Right cardiac atrium (tissue), 5 donors: ENCODE measurements at regions of chr14 and their contacts with region 1.

Region 1: DNA sequence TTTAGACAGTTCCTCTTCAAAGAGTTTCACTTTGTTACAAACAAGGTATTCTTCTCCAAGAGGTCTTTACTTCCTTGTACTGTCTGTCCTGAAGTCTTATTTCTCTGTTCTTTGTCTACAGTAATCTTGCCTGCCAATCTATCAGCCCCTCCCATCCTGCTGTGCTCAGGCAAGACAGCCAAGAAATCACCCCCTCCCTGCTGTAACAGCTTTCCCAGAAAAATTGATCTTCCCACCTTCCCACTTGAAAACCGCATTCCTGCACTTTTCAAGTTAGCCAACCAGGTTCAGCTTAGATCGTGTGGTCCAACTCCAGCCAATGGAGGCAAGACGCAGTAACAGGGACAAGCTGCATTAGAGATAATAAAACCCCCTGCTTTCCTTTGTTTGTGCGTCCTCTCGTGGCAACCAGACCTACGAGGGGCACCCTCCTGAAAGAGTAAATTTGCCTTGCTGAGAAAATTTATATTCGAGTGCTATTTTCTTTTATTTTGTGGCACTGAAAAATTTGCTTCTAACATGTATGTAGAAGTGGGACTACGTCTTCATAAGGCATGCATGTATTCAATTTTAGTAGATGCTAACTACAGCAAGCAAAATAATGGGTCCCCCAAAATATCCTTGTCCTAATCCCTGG is 46.5 kb upstream of the ESR2 start:
- DNase-seq: no peak
- ATAC-seq: no peak
- H3K4me3 ChIP-seq: no peak overlapping the region
- H3K27ac ChIP-seq: no peak overlapping the region
- H3K4me1 ChIP-seq: no peaks in the 10 kb centered on the region
- H3K27me3 ChIP-seq: no peaks in the 10 kb centered on the region

Region 2: DNA sequence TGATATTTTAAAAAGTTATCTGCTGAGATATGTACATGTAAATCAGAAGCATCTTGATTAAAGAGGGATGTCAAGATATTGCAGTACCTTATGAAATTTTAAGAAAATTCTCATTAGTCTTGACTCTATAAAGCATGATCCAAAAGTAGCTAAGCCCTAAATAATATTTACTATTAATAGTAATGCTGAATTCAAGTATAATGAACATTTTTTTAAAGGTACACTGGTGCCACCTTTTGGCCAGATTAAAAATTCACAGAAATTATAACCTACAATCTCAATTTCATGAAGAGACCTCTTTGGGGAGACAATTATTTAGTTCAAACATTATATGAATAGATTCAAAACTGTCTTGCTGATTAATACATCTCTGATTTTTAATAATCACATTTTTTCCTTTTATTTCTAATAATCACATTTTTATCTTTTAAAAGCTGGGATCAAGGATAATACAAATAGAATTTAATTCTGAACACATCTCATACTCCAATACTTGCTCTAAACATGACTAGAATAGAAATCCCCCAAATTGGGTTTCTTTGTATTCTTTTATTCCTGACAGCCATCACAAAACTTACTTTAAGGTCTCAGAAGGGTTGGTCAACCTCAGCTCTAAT is 138.1 kb after region 1 on chr14:
- intact Hi-C with region 1: loop called in 2 of 4 experiments (anchors 10 kb)
- DNase-seq: no peak
- ATAC-seq: no peak
- H3K4me3 ChIP-seq: no peak overlapping the region
- H3K27ac ChIP-seq: no peak overlapping the region
- H3K4me1 ChIP-seq: no peaks in the 10 kb centered on the region
- H3K27me3 ChIP-seq: no peaks in the 10 kb centered on the region

Region 3: DNA sequence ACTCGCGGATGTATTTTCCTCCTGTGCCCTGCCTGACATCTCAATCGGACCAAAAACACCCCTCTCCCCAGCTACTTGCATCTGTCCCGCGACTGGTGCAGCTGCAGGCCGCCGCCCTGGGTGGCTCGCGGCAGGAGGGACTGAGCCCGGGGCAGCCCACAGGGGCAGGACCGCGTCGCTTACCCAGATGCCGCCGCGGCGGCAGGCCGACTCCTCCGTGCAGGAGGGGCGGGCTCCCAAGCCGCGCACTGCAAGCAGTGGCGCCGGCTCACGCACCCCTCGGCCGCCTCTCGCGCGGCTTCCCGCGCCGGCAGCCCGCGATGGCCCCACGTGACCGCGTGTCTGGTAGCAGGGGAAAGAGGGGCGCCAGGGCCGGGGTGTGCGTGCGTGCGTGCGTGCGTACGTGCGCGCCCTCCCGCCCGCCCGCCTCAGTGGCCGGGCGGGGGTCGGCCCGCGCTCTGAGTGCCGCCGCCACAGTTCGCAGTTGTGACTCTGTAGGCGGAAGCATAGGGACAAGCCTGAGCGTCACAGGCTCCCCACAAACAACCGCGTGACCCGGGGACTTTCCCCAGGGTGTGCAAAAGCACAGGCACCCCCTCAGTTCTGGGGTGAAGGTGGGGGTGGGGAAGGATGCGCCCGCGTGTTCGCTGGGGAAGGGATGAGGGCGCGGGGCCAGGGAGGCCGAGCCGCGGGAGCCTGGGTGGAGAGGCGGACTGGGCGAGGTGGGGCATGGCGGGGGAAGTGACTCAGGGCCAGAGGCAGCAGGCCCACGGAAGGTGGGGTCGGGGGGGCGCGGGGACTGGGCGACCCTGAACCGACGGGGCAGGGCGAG is 163.0 kb after region 1 on chr14 and contains the start of gene ZBTB25:
- intact Hi-C with region 1: loop called in 1 of 4 experiments (anchors 10 kb)
- DNase-seq: peak; percentile 92 to 97 (median 97)
- ATAC-seq: peak; percentile 87 to 90
- H3K4me3 ChIP-seq: peak within 1 kb of the TSS; percentile 65
- H3K27ac ChIP-seq: peak within 1 kb of the TSS; percentile 98
- H3K4me1 ChIP-seq: peaks cover 11% of the 10 kb centered on the region
- H3K27me3 ChIP-seq: no peaks in the 10 kb centered on the region
- total RNA-seq, gene ZBTB25: 14.1 to 18.4 (median 16.4) TPM

Region 4: DNA sequence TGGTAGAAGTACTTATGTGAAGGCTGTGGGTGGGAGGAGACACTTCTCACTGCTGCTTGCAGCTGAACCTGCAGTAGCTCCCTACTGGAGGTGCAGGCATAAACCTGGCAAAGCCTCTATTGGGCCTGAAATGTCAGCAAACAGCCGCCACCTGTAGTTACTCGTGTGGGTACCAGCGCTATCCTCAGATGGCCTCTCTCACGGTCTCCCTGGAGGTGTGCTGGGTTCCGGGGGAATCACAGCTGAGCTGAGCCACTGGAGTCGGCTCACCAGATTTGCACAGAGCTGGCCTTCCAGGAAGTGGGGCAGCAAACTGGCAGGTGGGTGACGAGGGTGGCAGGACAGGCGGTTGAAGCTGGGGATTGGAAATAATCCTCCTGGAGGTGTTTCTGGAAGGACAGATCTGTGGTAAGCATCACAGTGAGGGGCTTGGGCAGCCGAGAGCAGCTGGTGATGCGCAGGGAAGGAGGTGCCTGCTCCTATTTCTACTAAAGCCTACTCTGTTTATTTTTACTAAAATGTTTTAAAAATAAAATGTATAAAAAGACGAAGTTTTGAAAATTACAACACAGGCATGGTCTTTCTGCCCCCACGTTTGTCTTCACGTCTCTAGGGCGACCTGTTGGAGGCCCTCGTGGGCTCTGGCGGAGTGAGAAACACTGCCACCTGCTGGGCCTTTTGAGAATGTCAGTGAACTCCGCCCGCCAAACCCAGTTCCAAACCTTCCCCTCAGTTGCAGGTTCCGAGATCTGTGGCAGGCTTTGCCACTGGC is 295.7 kb after region 1 on chr14:
- intact Hi-C with region 1: loop called in 2 of 4 experiments (anchors 10 kb)
- DNase-seq: peak; percentile 58 to 84 (median 83)
- ATAC-seq: peak; percentile 89 to 90
- H3K4me3 ChIP-seq: no peak overlapping the region
- H3K27ac ChIP-seq: no peak overlapping the region
- H3K4me1 ChIP-seq: no peaks in the 10 kb centered on the region
- H3K27me3 ChIP-seq: no peaks in the 10 kb centered on the region

Region 5: GRCh38 chr14:64704143-64704742 is 363.6 kb after region 1 on chr14 and contains the start of gene PLEKHG3:
- intact Hi-C with region 1: no loop called
- DNase-seq: peak; percentile 84 to 94 (median 94)
- ATAC-seq: peak; percentile 83
- H3K4me3 ChIP-seq: peak within 1 kb of the TSS; percentile 80
- H3K27ac ChIP-seq: peak within 1 kb of the TSS; percentile 44
- H3K4me1 ChIP-seq: peaks cover 19% of the 10 kb centered on the region
- H3K27me3 ChIP-seq: no peaks in the 10 kb centered on the region
- total RNA-seq, gene PLEKHG3: 35.7 to 58.7 (median 50.6) TPM